Activated CD4-positive, alpha-beta memory T cell treated with anti-CD3 and anti-CD28 coated beads, Interleukin-2, amount 10 ng/mL, durations not matched to agents 7 days and 5 days (primary cell): ENCODE measurements at regions of chr16 and their contacts with region 1.

Region 1: GRCh38 chr16:3400779-3401688 is at the starts of genes ZNF174 and ZSCAN32:
- DNase-seq: peak; percentile 99
- H3K4me3 Mint-ChIP-seq: peak within 1 kb of the TSS; percentile 87
- H3K27ac Mint-ChIP-seq: peak within 1 kb of the TSS; percentile 86
- H3K4me1 Mint-ChIP-seq: peaks cover 37% of the 10 kb centered on the region
- H3K27me3 Mint-ChIP-seq: no peaks in the 10 kb centered on the region
- total RNA-seq, gene ZNF174: 11.0 to 12.4 TPM
- total RNA-seq, gene ZSCAN32: 17.8 to 18.3 TPM

Region 2: GRCh38 chr16:3214904-3215600 is 186.0 kb before region 1 on chr16:
- CTCF ChIA-PET with region 1: no interaction called
- POLR2A ChIA-PET with region 1: interaction called, 10 read pairs
- DNase-seq: peak; percentile 61
- H3K4me3 Mint-ChIP-seq: peak overlapping the region; percentile 35
- H3K27ac Mint-ChIP-seq: peak overlapping the region; percentile 99
- H3K4me1 Mint-ChIP-seq: peaks cover 35% of the 10 kb centered on the region
- H3K27me3 Mint-ChIP-seq: no peaks in the 10 kb centered on the region

Region 3: GRCh38 chr16:3264137-3265036 is 136.6 kb before region 1 on chr16:
- CTCF ChIA-PET with region 1: interaction called, 7 read pairs
- POLR2A ChIA-PET with region 1: interaction called, 19 read pairs
- DNase-seq: peak; percentile 96
- H3K4me3 Mint-ChIP-seq: peak overlapping the region; percentile 80
- H3K27ac Mint-ChIP-seq: peak overlapping the region; percentile 97
- H3K4me1 Mint-ChIP-seq: peaks cover 30% of the 10 kb centered on the region
- H3K27me3 Mint-ChIP-seq: no peaks in the 10 kb centered on the region

Region 4: GRCh38 chr16:3305109-3306068 is 95.6 kb before region 1 on chr16 and contains the starts of genes TIGD7 and ZNF75A:
- CTCF ChIA-PET with region 1: no interaction called
- POLR2A ChIA-PET with region 1: interaction called, 11 read pairs
- DNase-seq: peak; percentile 86
- H3K4me3 Mint-ChIP-seq: peak within 1 kb of the TSS; percentile 73
- H3K27ac Mint-ChIP-seq: peak within 1 kb of the TSS; percentile 70
- H3K4me1 Mint-ChIP-seq: peaks cover 17% of the 10 kb centered on the region
- H3K27me3 Mint-ChIP-seq: no peaks in the 10 kb centered on the region
- total RNA-seq, gene TIGD7: 5.4 to 7.6 TPM
- total RNA-seq, gene ZNF75A: 34.2 to 36.7 TPM

Region 5: GRCh38 chr16:3389663-3390338 is 11.2 kb before region 1 on chr16:
- CTCF ChIA-PET with region 1: no interaction called
- POLR2A ChIA-PET with region 1: no interaction called
- DNase-seq: no peak
- H3K4me3 Mint-ChIP-seq: no peak overlapping the region
- H3K27ac Mint-ChIP-seq: no peak overlapping the region
- H3K4me1 Mint-ChIP-seq: no peaks in the 10 kb centered on the region
- H3K27me3 Mint-ChIP-seq: no peaks in the 10 kb centered on the region

Region 6: DNA sequence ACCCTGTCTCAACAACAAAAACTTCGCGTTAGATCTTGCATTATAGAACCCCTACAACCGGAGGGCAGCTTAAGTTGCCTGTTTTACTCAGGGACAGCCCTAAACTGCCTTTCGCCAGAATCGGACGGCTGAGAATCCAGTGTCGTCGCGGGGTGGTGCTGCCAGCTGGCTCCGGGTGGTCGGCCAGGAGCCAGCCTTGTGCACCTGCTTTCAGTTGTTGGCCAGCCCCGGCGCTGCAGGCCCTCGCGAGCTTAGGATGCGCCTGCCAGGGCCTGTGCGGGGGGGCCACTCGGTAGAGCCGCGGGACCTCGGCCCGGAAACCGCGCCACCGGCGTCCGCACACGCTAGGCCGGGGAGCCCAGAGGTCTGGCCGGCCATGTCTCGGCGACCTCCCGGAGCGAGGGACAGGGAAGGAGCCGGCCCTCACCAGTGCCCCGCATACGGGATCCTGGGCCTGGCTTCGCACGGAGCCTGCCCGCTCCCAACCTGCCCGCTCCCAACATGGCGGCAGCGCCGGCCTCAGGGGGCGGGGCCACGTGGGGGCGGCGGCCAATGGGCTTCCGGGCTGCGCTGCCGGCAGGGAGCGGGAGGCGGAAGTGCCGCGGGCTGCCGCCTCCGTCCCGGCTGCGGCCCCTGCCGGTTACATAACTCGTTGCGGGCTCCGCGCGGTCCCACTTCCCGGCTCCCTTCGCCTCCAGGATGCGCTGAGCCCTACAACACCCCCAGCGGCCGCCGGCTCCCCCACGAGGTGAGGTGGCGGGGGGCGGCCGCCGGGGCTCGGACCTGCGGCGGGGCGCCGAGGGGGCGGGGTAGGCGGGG is 56.6 kb after region 1 on chr16:
- CTCF ChIA-PET with region 1: interaction called, 6 read pairs
- POLR2A ChIA-PET with region 1: interaction called, 17 read pairs
- DNase-seq: peak; percentile 90
- H3K4me3 Mint-ChIP-seq: peak overlapping the region; percentile 74
- H3K27ac Mint-ChIP-seq: peak overlapping the region; percentile 70
- H3K4me1 Mint-ChIP-seq: peaks cover 47% of the 10 kb centered on the region
- H3K27me3 Mint-ChIP-seq: no peaks in the 10 kb centered on the region